ENCODE measurements at regions of chr5 and their contacts with region 1.

Region 1: DNA sequence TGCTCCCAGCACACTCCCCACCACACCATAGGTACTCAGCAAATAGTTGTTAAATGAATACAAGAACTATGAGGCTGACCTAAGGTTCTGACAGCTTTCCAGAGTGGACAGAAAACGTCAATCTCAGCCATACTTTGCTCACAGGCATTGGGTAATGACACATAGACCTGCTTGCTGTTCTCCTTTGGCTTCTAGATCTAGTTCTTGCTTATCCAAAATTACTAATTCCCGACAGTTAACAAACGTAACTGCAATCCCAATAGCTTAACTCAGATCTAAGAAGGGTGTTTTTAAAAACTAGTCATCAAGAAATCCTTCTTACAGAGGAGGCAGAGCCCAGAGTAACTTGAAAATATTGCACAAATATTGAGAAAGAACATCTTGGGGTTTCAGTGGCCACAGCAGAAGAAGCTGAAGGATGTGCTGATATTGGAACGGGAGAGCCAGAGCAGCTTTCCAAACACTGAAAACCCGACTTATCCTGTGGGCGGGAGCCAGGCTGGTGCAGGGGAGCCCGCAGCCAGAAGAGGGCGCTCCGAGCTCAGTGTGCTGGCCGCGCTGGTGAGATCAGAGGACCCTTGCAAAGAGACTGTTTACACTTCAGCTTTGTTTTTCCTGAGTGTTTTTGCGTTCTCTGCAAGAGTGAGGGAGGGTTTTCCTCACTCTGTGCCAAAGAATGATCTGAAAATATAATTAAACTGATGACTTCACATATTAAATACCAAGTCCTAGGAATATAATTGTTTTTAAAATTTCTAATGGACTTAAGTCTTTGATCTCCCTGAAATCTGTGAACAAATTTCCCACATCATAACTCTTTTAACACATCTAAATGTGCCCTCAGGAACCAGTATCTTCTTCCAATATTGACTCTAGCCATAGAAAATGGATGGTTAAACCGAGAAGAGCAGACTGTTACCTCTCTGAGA is 30.3 kb downstream of the FGF1 start:
- DNase-seq: peak; percentile 45
- H3K4me3 Mint-ChIP-seq: no peak overlapping the region
- H3K27ac Mint-ChIP-seq: no peak overlapping the region
- H3K4me1 Mint-ChIP-seq: no peaks in the 10 kb centered on the region
- H3K27me3 Mint-ChIP-seq: peaks cover 13% of the 10 kb centered on the region

Region 2: GRCh38 chr5:142215915-142216681 is 439.5 kb before region 1 on chr5:
- intact Hi-C with region 1: no loop called
- DNase-seq: no peak
- H3K4me3 Mint-ChIP-seq: no peak overlapping the region
- H3K27ac Mint-ChIP-seq: no peak overlapping the region
- H3K4me1 Mint-ChIP-seq: peaks cover 6% of the 10 kb centered on the region
- H3K27me3 Mint-ChIP-seq: peaks cover 6% of the 10 kb centered on the region

Region 3: DNA sequence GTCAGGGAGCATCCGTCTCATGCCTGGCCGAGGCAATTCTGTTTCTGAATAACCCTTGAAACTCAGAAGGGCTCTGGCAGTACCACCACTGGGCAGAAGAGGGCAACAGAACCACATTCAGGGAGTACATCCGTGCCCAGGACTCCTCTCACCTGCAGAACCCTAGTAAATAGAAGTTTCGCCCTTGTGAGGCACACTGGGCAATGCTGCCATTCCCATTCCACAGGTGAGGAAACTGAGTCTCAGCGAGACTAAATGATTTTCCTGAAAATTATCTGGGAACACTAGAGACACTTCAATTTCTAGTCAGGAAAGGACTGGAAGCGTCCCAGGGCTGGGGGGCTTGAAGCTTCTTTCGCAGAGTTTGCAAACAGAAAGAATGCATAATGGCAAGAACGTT is 44.4 kb before region 1 on chr5:
- intact Hi-C with region 1: loop called (anchors 1 kb)
- DNase-seq: peak; percentile 44
- H3K4me3 Mint-ChIP-seq: no peak overlapping the region
- H3K27ac Mint-ChIP-seq: no peak overlapping the region
- H3K4me1 Mint-ChIP-seq: no peaks in the 10 kb centered on the region
- H3K27me3 Mint-ChIP-seq: peaks cover 19% of the 10 kb centered on the region

Region 4: DNA sequence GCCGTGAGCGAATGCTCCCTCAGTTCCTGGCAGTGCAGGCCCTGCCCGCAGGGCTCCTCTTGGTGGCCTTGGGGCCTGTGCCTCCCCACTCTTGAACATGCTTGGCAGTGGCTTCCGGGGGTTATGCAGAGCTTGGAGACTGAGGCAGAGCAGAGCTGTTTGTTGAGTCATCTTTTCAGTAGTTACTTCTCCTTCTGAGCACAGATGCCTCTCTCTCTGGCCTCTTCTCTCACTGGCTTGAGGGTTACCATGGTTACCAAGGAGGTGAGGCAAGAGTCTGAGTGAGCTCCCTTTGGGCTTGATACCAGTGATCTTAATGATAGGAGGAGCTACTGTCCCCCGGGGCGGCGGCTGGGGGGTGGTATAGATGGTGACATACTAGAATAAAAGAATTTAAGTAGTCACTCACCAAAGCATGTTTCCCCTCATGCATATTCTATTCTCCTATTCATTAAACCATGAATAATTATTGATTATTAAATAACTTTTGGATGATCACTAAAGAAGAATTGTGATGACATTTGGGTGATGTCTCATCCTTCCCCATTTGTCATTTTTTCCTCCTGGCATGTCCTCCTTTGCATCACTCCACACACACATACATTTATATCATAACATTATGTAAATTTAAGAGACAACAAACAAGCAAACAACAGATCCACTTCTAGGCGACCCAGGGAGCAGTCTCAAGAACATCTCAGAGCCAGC is 225.6 kb after region 1 on chr5:
- intact Hi-C with region 1: loop called (anchors 2 kb)
- DNase-seq: no peak
- H3K4me3 Mint-ChIP-seq: no peak overlapping the region
- H3K27ac Mint-ChIP-seq: no peak overlapping the region
- H3K4me1 Mint-ChIP-seq: peaks cover 6% of the 10 kb centered on the region
- H3K27me3 Mint-ChIP-seq: no peaks in the 10 kb centered on the region

Region 5: GRCh38 chr5:142888469-142889085 is 233.0 kb after region 1 on chr5:
- intact Hi-C with region 1: loop called (anchors 1 kb)
- DNase-seq: no peak
- H3K4me3 Mint-ChIP-seq: no peak overlapping the region
- H3K27ac Mint-ChIP-seq: no peak overlapping the region
- H3K4me1 Mint-ChIP-seq: peaks cover 19% of the 10 kb centered on the region
- H3K27me3 Mint-ChIP-seq: no peaks in the 10 kb centered on the region

Measured in activated T-helper 1 cell treated with anti-CD3 and anti-CD28 coated beads, Interleukin-12 subunit alpha, Interleukin-12 subunit beta, Interleukin-2, Interleukin-4 antibody, amounts not matched to agents 30 ng/mL and 10 ng/mL and 1 ng/mL, durations not matched to agents 14 hours and 24 hours and 36 hours (primary cell).